ENCODE measurements at regions of chr18 and their contacts with region 1.

Region 1: DNA sequence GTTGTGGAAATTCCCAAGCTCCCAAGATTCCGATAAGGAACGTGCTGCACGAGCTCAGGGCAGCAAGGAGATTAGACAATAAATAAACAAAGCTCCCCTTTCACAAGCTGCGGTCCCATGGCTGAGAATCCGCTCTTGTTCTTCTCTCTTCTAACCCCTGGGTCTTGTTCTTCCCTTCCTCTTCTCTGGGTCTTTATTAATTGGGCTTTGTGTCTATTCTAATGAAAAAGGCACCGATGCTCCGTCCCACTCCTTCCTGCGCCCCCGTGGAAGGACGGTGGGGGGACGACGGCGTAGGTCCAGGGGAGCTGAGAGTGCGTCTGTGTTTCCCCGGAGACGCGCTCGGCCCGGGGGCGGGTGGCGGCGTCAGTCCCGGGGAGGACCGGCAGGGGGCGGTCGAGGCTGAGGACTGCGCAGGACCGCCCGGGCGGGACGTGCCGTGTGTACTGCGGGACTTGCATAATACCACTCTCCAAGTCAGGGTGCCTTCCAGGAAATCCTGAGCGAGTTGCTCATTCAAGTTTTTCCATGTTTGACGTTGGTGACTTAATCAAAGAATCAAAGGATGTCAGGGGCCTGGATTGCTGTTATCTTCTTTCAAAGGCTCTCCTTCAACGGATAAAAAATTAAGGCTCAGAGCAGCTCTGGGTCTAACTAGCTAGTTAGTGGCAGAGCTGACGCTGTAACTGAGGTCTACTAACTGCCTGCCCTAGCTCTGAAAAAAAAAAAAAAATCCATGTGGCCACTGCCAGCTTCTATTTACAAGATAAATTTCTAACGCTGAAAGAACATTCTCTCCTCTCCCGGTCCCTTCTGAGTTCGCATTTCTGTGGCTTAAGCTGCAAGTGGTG is 321.4 kb downstream of the TGIF1 start:
- DNase-seq: peak; percentile 92
- ATAC-seq: peak; percentile 99

Region 2: GRCh38 chr18:3869848-3870247 is 98.5 kb after region 1 on chr18:
- intact Hi-C with region 1: loop called (anchors 10 kb)
- DNase-seq: no peak
- ATAC-seq: peak; percentile 42

Region 3: GRCh38 chr18:3995476-3996102 is 224.2 kb after region 1 on chr18:
- intact Hi-C with region 1: loop called (anchors 5 kb)
- DNase-seq: no peak
- ATAC-seq: peak; percentile 51

Region 4: GRCh38 chr18:4068552-4069158 is 297.3 kb after region 1 on chr18:
- intact Hi-C with region 1: loop called (anchors 5 kb)
- DNase-seq: no peak
- ATAC-seq: peak; percentile 27